ENCODE measurements at regions of chr9 and their contacts with region 1.

Region 1: GRCh38 chr9:84397151-84397728 is 56.7 kb upstream of the SLC28A3 start:
- DNase-seq: peak; percentile 44 to 71 (median 64)
- ATAC-seq: peak; percentile 92 to 97 (median 95)
- H3K4me3 ChIP-seq: no peak overlapping the region
- H3K27ac ChIP-seq: no peak overlapping the region
- H3K4me1 ChIP-seq: no peaks in the 10 kb centered on the region
- H3K27me3 ChIP-seq: no peaks in the 10 kb centered on the region
- CTCF ChIP-seq: peak; percentile 87 to 97 (median 96)
- POLR2A ChIP-seq: no peak

Region 2: GRCh38 chr9:84447305-84447704 is 50.1 kb after region 1 on chr9:
- intact Hi-C with region 1: no loop called
- DNase-seq: no peak
- ATAC-seq: no peak
- H3K4me3 ChIP-seq: no peak overlapping the region
- H3K27ac ChIP-seq: no peak overlapping the region
- H3K4me1 ChIP-seq: no peaks in the 10 kb centered on the region
- H3K27me3 ChIP-seq: no peaks in the 10 kb centered on the region
- CTCF ChIP-seq: no peak
- POLR2A ChIP-seq: no peak

Region 3: GRCh38 chr9:85258823-85259370 is 861.7 kb after region 1 on chr9:
- intact Hi-C with region 1: loop called in 1 of 2 experiments (anchors 10 kb)
- DNase-seq: peak; percentile 42 to 60 (median 51)
- ATAC-seq: peak; percentile 64 to 89 (median 83)
- H3K4me3 ChIP-seq: no peak overlapping the region
- H3K27ac ChIP-seq: no peak overlapping the region
- H3K4me1 ChIP-seq: no peaks in the 10 kb centered on the region
- H3K27me3 ChIP-seq: no peaks in the 10 kb centered on the region
- CTCF ChIP-seq: peak; percentile 34 to 65 (median 48)
- POLR2A ChIP-seq: no peak

Measured in right lobe of liver (tissue), 6 donors.